WTC11 (cell line): ENCODE measurements at regions of chr6 and their contacts with region 1.

Region 1: DNA sequence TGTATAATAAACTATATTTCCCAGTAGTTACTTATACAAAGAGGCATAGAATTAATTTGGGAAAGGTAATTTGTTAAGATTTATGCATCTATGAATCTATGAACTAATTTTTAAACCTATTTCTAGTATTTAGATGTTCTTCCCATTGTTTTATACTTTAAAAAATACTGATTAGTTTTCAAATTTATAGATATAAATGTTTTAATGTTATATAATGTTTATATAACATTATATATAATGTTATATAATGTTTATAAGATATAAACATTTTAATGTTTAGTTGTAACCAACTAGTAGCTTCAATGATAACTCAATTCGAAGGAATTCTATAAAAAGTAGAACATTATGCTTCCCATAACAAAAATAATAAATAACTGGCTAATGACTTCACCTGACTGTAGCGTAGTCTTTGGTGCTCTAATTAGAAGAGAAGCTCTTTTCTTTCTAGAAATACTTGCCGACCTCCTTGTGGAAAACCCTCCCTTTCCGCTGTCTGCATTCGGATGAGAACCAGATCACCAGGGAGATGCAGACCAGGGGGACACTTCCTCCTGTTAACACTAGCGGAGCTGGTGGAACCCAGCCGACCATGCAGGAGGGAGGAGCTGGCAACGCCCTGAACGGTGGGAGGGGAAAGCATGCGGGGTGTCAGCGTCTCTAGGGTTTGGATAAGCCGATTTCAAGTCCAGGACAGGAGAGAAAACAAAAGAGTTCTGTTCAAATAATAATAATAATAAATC is 158.4 kb downstream of the OR2B2 start:
- DNase-seq: peak; percentile 82
- ATAC-seq: peak; percentile 76
- H3K4me3 Mint-ChIP-seq: peak overlapping the region; percentile 95
- H3K27ac Mint-ChIP-seq: peak overlapping the region; percentile 57; the same call in 1 of the 2 replicates
- H3K4me1 Mint-ChIP-seq: peaks cover 30% of the 10 kb centered on the region
- H3K27me3 Mint-ChIP-seq: peaks cover 77% of the 10 kb centered on the region
- CTCF ChIP-seq: no peak

Region 2: DNA sequence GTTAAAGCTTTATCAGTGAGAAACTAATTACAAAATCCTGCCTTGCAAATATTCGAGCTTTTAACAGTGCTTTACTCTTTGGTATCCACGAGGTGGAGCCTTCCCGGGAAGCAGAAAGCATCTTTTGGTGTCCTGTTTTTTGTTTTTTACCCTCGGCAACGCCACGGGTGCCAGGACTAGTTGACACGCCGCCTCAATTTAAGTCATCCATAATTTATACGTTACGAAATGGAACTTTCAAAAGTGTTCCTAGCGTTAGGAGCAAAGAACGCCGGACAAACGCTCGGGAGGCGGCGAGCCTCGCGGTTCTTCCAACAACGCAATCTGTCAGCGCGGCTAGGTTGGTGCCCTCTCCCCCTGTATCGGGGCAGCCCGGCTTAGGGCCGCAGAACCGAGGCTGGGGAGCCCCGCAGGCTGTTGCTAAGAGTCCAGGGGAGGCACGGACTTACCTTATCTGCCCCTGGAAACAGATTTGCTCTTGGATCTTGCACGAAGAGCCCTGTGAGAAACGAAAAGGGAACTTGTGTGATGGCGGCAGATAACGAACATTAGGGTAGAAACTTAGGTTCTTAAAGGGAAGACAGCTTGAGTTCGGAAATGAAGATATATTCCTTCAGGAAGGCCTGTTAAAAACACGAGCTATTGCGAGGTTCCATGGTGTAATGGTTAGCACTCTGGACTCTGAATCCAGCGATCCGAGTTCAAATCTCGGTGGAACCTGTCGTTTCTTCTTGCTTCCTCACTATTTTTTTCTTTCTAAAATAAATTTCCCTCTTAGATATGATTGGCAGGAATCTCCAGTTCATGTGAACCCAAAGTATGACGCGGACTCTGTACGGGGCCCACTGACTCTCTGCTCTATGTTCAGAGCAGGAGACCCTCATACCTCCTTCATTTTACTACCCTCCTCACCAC is 234.7 kb before region 1 on chr6:
- CTCF ChIA-PET with region 1: interaction called, 10 read pairs
- POLR2A ChIA-PET with region 1: no interaction called
- DNase-seq: peak; percentile 67
- ATAC-seq: peak; percentile 91
- H3K4me3 Mint-ChIP-seq: peak overlapping the region; percentile 94
- H3K27ac Mint-ChIP-seq: peak overlapping the region; percentile 84
- H3K4me1 Mint-ChIP-seq: peaks cover 9% of the 10 kb centered on the region
- H3K27me3 Mint-ChIP-seq: peaks cover 31% of the 10 kb centered on the region
- CTCF ChIP-seq: peak; percentile 66

Region 3: GRCh38 chr6:27592481-27593199 is 161.2 kb before region 1 on chr6:
- CTCF ChIA-PET with region 1: interaction called, 11 read pairs
- POLR2A ChIA-PET with region 1: no interaction called
- DNase-seq: peak; percentile 76
- ATAC-seq: peak; percentile 96
- H3K4me3 Mint-ChIP-seq: no peak overlapping the region
- H3K27ac Mint-ChIP-seq: no peak overlapping the region
- H3K4me1 Mint-ChIP-seq: peaks cover 7% of the 10 kb centered on the region; the same call in 1 of the 2 replicates
- H3K27me3 Mint-ChIP-seq: peaks cover 17% of the 10 kb centered on the region
- CTCF ChIP-seq: no peak

Region 4: GRCh38 chr6:27617700-27618689 is 135.8 kb before region 1 on chr6:
- CTCF ChIA-PET with region 1: interaction called, 13 read pairs
- POLR2A ChIA-PET with region 1: no interaction called
- DNase-seq: peak; percentile 60
- ATAC-seq: peak; percentile 78
- H3K4me3 Mint-ChIP-seq: peak overlapping the region; percentile 99
- H3K27ac Mint-ChIP-seq: 0 out of 2 replicates have a peak overlapping the region, but pooled peaks have one; percentile 9
- H3K4me1 Mint-ChIP-seq: peaks cover 10% of the 10 kb centered on the region
- H3K27me3 Mint-ChIP-seq: peaks cover 12% of the 10 kb centered on the region
- CTCF ChIP-seq: no peak

Region 5: DNA sequence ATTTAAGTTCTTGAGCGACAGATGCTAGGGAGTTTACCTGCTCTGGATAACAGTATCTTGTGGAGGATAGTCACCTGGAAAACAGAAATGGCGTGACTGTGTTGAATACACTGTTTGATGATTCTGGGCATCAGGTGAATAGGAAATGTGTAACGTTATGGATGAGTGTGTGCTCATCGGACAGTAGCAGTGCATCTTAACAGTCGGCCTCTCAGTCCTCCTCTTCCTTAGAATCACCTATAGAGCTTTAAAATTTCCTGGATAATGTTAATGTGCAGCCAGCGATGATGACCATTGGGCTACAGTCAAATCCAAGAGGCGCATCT is 59.3 kb before region 1 on chr6:
- CTCF ChIA-PET with region 1: interaction called, 13 read pairs
- POLR2A ChIA-PET with region 1: no interaction called
- DNase-seq: no peak
- ATAC-seq: no peak
- H3K4me3 Mint-ChIP-seq: peak overlapping the region; percentile 97
- H3K27ac Mint-ChIP-seq: peak overlapping the region; percentile 95
- H3K4me1 Mint-ChIP-seq: peaks cover 12% of the 10 kb centered on the region
- H3K27me3 Mint-ChIP-seq: peaks cover 4% of the 10 kb centered on the region
- CTCF ChIP-seq: no peak

Region 6: GRCh38 chr6:27726620-27727023 is 27.2 kb before region 1 on chr6:
- CTCF ChIA-PET with region 1: interaction called, 20 read pairs
- POLR2A ChIA-PET with region 1: no interaction called
- DNase-seq: peak; percentile 61
- ATAC-seq: peak; percentile 95
- H3K4me3 Mint-ChIP-seq: no peak overlapping the region
- H3K27ac Mint-ChIP-seq: no peak overlapping the region
- H3K4me1 Mint-ChIP-seq: peaks cover 11% of the 10 kb centered on the region
- H3K27me3 Mint-ChIP-seq: peaks cover 48% of the 10 kb centered on the region
- CTCF ChIP-seq: no peak

Region 7: GRCh38 chr6:27772261-27773001 is 18.6 kb after region 1 on chr6:
- CTCF ChIA-PET with region 1: interaction called, 57 read pairs
- POLR2A ChIA-PET with region 1: interaction called, 3 read pairs
- DNase-seq: peak; percentile 89
- ATAC-seq: peak; percentile 82
- H3K4me3 Mint-ChIP-seq: peak overlapping the region; percentile 59
- H3K27ac Mint-ChIP-seq: no peak overlapping the region; the same call in 1 of the 2 replicates
- H3K4me1 Mint-ChIP-seq: peaks cover 35% of the 10 kb centered on the region
- H3K27me3 Mint-ChIP-seq: peaks cover 100% of the 10 kb centered on the region
- CTCF ChIP-seq: peak; percentile 87

Region 8: DNA sequence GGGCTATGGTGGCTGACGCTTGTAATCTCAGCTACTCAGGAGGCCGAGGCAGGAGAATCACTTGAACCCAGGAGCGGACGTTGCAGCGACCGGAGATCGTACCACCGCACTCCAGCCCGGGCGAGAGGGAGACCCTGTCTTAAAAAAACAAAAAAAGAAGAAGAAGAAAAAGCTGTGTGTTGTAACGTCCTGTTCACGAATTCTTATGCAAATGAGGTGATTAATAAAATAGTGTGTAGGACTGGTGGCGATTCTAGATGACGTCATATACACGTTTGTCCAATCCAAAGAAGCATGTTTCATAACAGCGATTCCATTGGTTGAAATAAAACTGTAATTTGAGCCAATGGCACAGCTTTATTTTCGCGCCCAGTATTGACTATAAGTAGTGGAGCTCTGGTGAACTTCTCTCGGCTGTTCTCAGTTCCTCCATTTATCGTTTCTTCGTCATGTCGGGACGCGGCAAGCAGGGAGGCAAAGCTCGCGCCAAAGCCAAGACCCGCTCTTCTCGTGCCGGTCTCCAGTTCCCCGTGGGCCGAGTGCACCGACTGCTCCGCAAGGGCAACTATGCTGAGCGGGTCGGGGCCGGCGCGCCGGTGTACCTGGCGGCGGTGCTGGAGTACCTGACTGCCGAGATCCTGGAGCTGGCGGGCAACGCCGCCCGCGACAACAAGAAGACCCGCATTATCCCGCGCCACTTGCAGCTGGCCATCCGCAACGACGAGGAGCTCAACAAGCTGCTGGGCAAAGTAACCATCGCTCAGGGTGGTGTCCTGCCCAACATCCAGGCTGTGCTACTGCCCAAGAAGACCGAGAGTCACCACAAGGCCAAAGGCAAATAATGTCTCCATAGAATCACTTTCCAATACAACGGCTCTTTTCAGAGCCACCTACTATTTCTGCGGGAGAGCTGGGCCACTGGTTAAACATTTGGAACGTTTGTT is 111.3 kb after region 1 on chr6:
- CTCF ChIA-PET with region 1: no interaction called
- POLR2A ChIA-PET with region 1: no interaction called
- DNase-seq: peak; percentile 73
- ATAC-seq: peak; percentile 51
- H3K4me3 Mint-ChIP-seq: peak overlapping the region; percentile 97
- H3K27ac Mint-ChIP-seq: peak overlapping the region; percentile 100
- H3K4me1 Mint-ChIP-seq: peaks cover 25% of the 10 kb centered on the region
- H3K27me3 Mint-ChIP-seq: peaks cover 4% of the 10 kb centered on the region; the same call in 1 of the 2 replicates
- CTCF ChIP-seq: no peak